Calu3 (cell line): ENCODE measurements at regions of chr10 and their contacts with region 1.

Region 1: DNA sequence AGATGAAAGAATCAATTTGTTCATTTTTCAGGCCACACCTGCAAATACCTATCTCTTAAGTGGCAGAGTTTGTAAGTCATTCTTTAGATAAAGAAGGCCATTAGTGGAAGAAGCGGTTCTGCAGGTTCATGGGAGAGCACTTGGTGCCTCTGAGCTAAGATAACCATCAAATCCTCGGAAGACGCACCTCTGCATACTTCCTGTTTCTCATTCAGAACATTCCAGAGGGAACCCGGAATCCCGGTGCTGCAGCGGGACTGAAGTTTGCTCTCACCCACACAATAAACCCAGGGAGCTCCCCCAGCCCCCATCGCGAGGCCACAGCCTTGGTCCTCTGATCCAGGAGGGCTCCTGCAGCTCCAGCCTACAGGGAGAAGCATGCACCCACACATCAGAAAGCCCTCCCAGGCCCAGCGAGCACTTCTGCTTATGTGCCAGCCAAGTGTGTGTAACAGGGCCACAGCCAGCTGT is 142.5 kb downstream of the DIP2C start:
- DNase-seq: peak; percentile 65
- H3K4me3 Mint-ChIP-seq: peak overlapping the region; percentile 48
- H3K27ac Mint-ChIP-seq: peak overlapping the region; percentile 79
- H3K4me1 Mint-ChIP-seq: peaks cover 26% of the 10 kb centered on the region
- H3K27me3 Mint-ChIP-seq: no peaks in the 10 kb centered on the region
- CTCF ChIP-seq: no peak

Region 2: GRCh38 chr10:178208-178607 is 368.7 kb before region 1 on chr10:
- CTCF ChIA-PET with region 1: no interaction called
- intact Hi-C with region 1: no loop called
- DNase-seq: no peak
- H3K4me3 Mint-ChIP-seq: no peak overlapping the region
- H3K27ac Mint-ChIP-seq: no peak overlapping the region
- H3K4me1 Mint-ChIP-seq: no peaks in the 10 kb centered on the region
- H3K27me3 Mint-ChIP-seq: no peaks in the 10 kb centered on the region
- CTCF ChIP-seq: peak; percentile 24

Region 3: DNA sequence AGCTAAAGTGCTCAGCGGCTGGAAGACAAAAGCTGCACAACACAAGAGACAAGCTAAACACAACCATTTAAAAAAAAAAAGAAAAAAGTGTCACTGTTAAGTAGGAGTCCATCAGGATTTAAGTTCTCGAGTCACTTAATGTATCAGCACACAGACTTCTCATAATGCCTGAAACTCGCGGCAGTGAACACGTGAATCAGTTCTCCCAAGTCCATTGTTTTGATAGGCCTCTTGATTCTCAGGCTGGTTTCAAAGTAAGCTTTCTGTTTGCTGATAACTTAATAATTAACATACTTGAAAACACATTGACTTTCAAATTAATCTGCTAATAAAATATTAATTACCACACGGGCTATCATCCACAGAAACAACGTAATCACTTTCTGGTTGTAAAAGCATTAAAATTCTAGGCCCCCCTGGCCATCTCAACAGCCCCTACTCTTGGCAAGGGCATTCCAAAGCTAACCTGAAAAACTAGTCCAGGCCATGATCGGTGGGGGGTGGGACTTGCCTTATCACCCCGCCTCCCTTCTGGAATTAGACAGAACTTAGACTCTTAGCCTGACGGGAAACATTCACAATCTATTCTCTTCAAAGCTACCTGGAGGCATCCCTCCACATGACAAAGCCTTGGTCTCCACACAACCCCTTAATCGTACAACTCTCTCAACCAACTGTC is 13.5 kb after region 1 on chr10:
- CTCF ChIA-PET with region 1: interaction called, 12 read pairs
- intact Hi-C with region 1: no loop called
- DNase-seq: no peak
- H3K4me3 Mint-ChIP-seq: peak overlapping the region; percentile 41
- H3K27ac Mint-ChIP-seq: peak overlapping the region; percentile 30
- H3K4me1 Mint-ChIP-seq: peaks cover 27% of the 10 kb centered on the region
- H3K27me3 Mint-ChIP-seq: no peaks in the 10 kb centered on the region
- CTCF ChIP-seq: no peak

Region 4: DNA sequence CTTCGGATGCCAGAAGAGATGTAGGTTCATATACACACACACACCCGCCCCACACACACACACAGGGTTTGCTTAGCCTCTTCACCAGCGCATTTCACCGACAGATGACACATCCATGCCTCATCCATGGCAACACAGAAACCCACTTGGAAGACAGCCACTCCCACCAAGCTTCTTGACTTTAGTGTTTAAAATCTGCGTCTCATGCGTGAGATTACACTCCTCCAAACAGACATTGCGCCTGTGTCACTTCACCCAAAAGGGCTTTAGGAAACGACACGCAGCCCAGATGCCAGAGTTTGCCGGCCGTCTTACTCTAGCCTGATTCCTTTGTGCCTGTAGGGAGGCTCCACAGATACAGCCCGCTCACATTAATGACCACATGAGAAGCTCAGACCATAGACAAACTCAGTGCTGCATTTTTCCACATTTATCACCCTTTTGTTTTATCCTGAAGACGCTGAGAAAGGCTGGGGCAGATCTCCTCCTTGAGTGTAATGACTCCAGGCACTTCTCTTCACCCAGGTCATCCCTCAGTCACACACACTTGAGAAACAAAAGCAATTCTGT is 68.7 kb after region 1 on chr10:
- CTCF ChIA-PET with region 1: no interaction called
- intact Hi-C with region 1: loop called (anchors 5 kb)
- DNase-seq: no peak
- H3K4me3 Mint-ChIP-seq: no peak overlapping the region
- H3K27ac Mint-ChIP-seq: no peak overlapping the region
- H3K4me1 Mint-ChIP-seq: peaks cover 23% of the 10 kb centered on the region
- H3K27me3 Mint-ChIP-seq: no peaks in the 10 kb centered on the region
- CTCF ChIP-seq: no peak